PC-9 (cell line): ENCODE measurements at regions of chr3 and their contacts with region 1.

Region 1: DNA sequence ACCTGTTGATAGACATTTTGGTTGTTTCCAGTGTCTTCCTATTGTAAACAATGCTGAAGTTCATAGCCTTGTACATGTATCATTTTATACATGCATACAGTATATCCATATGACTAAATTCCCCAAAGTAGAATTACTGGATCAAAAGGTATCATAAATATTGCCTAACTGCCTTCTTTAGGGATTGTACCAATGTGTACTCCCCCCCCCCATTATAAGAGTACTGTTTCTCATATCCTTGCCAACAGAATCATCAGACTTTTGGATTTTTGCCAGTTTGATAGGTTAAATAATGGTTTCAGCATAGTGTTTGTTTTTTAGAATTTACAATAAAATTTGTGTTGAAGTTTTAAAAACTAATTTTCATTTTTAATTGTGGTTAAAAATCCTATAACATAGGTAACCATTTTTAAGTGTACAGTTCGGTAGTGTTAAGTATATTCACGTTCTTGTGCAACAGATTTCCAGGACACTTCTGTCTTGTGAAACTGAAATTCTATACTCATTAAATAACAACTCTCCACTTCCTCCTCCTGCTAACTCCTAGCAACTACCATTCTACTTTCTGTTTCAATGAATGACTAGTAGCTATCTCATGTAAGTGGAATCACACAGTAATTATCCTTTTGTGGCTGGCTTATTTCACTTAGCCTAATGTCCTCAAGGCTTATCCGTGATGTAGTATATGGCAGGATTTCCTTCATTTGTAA is 30.8 kb upstream of the MAP3K13 start:
- DNase-seq: peak in 1 of 2 experiments; percentile 99
- H3K4me3 ChIP-seq: peak overlapping the region; percentile 21; the same call in 1 of the 2 replicates
- H3K27ac ChIP-seq: peak overlapping the region; percentile 88
- H3K4me1 ChIP-seq: peaks cover 47% of the 10 kb centered on the region
- H3K27me3 ChIP-seq: no peaks in the 10 kb centered on the region
- CTCF ChIP-seq: no peak

Region 2: GRCh38 chr3:184676927-184677326 is 655.3 kb before region 1 on chr3:
- CTCF ChIA-PET with region 1: interaction called, 12 read pairs
- POLR2A ChIA-PET with region 1: no interaction called
- intact Hi-C with region 1: no loop called
- DNase-seq: no peak
- H3K4me3 ChIP-seq: no peak overlapping the region
- H3K27ac ChIP-seq: no peak overlapping the region
- H3K4me1 ChIP-seq: no peaks in the 10 kb centered on the region
- H3K27me3 ChIP-seq: peaks cover 33% of the 10 kb centered on the region
- CTCF ChIP-seq: no peak

Region 3: GRCh38 chr3:185282696-185283394 is 49.3 kb before region 1 on chr3:
- CTCF ChIA-PET with region 1: no interaction called
- POLR2A ChIA-PET with region 1: no interaction called
- intact Hi-C with region 1: loop called (anchors 2 kb)
- DNase-seq: peak; percentile 96 to 98
- H3K4me3 ChIP-seq: peak overlapping the region; percentile 95
- H3K27ac ChIP-seq: peak overlapping the region; percentile 55
- H3K4me1 ChIP-seq: peaks cover 8% of the 10 kb centered on the region
- H3K27me3 ChIP-seq: no peaks in the 10 kb centered on the region
- CTCF ChIP-seq: no peak

Region 4: DNA sequence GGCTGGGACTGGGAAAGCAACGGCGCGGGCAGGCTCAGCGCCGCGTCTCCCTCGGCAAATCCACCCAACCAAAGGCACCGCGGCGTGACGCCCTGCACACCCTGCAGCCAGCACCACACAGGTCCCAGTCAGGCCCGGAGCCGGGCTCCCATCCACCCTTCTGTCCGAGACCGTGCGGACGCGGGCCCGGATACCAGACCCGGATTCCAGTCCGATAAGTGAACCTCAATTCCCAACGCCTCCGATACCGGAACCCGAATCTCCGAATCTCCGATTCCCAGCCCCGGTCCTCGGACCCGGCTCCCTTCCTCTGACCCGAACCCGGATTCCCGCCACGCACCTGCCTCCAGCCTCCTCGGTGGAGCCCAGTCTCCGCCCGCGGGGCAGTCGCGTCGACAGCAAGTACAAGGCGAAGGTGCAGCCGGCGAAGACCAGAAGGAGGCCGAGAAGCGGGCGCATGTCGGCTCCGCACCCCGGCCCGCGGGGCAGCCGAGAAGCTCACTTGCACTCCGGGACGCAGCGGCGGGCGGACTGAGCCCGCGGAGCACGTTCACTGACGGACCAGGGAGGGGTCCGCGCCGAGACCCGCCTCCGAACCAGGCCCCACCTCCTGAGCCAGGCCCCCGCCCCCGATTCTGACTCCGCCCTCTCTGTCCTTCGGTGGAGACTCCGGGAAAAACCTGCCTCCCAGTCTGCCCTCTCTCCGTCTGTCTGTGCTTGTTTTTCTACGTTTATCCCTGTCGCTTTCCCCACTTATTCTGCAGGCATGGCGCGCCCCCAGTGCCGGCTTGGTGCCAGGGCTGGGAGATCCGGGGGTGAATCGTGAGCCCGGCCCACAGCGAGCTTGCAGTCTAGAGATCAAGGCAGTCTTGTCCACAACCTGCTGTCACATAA is 166.6 kb after region 1 on chr3 and contains the start of gene TMEM41A:
- CTCF ChIA-PET with region 1: no interaction called
- POLR2A ChIA-PET with region 1: no interaction called
- intact Hi-C with region 1: loop called (anchors 5 kb)
- DNase-seq: peak; percentile 81 to 98
- H3K4me3 ChIP-seq: peak within 1 kb of the TSS; percentile 78
- H3K27ac ChIP-seq: peak within 1 kb of the TSS; percentile 74
- H3K4me1 ChIP-seq: peaks cover 11% of the 10 kb centered on the region
- H3K27me3 ChIP-seq: no peaks in the 10 kb centered on the region
- CTCF ChIP-seq: 0 out of 2 replicates have a peak, but pooled peaks have one; percentile 17
- total RNA-seq, gene TMEM41A: 37.2 and 54.1 TPM in 2 replicates

Region 5: DNA sequence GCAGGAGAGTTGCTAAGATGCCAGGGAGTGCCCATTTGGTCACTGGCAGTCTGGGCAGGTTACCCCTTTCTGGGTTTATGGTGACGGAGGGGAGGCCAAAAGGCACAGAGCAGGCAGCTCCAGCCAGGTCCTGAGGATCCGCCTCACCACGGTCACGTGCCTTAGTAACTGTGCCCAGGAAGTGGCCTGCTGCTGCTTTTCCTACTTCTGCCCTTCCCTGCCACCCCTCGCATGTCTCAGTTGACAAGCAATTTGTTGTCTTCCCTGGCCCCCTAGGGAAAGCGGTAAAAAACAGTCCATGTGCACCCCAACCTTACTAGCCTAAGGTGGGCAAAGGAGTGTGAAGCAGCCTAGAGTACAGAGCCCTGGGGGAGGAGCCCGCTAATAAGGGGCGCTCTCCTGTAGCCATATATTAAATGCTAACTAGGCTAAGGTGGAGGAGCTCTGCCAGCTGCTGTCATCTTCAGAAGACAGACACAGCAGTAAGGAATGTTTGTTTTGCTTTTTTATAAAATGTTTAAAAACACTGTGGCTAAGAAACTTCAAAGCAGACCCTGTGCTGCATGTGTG is 229.3 kb after region 1 on chr3:
- CTCF ChIA-PET with region 1: interaction called, 4 read pairs
- POLR2A ChIA-PET with region 1: interaction called, 3 read pairs
- intact Hi-C with region 1: loop called (anchors 5 kb)
- DNase-seq: peak; percentile 26 to 60
- H3K4me3 ChIP-seq: peak overlapping the region; percentile 53; the same call in 1 of the 2 replicates
- H3K27ac ChIP-seq: peak overlapping the region; percentile 99; the same call in 1 of the 2 replicates
- H3K4me1 ChIP-seq: peaks cover 49% of the 10 kb centered on the region
- H3K27me3 ChIP-seq: no peaks in the 10 kb centered on the region
- CTCF ChIP-seq: no peak